Natural killer cell (primary cell): ENCODE measurements at regions of chr21 and their contacts with region 1.

Region 1: GRCh38 chr21:42892931-42893755 is at the start of gene NDUFV3:
- DNase-seq: peak; percentile 99 to 100
- ATAC-seq: peak; percentile 91 to 98 (median 92)
- H3K4me3 ChIP-seq: peak within 1 kb of the TSS; percentile 75
- H3K4me3 Mint-ChIP-seq: peak within 1 kb of the TSS; percentile 95
- H3K27ac ChIP-seq: peak within 1 kb of the TSS; percentile 91
- H3K27ac Mint-ChIP-seq: peak within 1 kb of the TSS; percentile 96 to 97
- H3K4me1 ChIP-seq: peaks cover 11% of the 10 kb centered on the region
- H3K4me1 Mint-ChIP-seq: peaks cover 8 to 14% of the 10 kb centered on the region in 2 donors
- H3K27me3 ChIP-seq: no peaks in the 10 kb centered on the region
- H3K27me3 Mint-ChIP-seq: no peaks in the 10 kb centered on the region
- CTCF ChIP-seq: no peak
- total RNA-seq, gene NDUFV3: 21.8 to 25.7 (median 23.9) TPM

Region 2: GRCh38 chr21:42652527-42653230 is 240.5 kb before region 1 on chr21:
- intact Hi-C with region 1: no loop called
- DNase-seq: no peak
- ATAC-seq: no peak
- H3K4me3 ChIP-seq: no peak overlapping the region
- H3K4me3 Mint-ChIP-seq: peak overlapping the region; percentile 83
- H3K27ac ChIP-seq: no peak overlapping the region
- H3K27ac Mint-ChIP-seq: peak overlapping the region in 1 of 2 donors; percentile 78
- H3K4me1 ChIP-seq: peaks cover 17% of the 10 kb centered on the region
- H3K4me1 Mint-ChIP-seq: peaks cover 0 to 16% of the 10 kb centered on the region in 2 donors
- H3K27me3 ChIP-seq: peaks cover 18% of the 10 kb centered on the region
- H3K27me3 Mint-ChIP-seq: peaks cover 35 to 42% of the 10 kb centered on the region in 2 donors
- CTCF ChIP-seq: no peak

Region 3: DNA sequence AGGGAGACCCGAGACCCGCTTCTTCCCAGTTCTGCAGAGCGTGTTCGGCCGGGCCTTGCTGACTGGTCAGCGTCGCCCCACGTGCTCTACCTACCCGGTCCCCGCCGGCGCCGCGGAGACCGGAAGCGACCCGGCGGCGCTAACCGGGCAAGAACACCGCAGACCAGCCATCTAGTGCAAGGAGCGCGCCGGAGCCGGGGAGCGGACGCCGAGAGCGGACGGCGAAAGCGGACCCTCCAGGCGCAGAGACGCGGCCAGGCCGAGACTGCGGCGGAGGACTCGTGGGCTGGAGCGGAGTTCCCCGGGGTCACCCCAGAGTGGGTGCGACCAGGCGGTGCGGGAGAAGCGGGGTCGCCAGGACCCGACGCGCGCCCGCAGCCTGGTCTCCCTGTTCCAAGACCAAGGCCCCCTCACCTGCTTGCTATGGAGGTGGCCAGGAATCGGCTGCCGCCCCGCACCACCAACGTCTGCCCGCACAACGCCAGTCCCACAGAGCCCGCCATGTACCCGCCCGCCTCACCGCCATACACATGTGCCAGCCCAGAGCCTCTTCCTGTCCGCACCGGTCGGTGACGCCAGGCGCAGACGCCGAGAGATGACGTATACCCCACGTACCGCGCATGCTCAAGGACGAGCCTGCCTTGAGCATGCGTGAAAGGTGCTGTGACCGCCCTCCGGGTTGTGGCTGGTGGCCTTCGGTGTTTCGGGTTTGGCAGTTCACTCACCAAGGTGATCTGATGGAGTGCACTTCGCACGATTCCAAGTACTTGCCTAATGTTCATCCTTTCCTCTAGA is 14.0 kb before region 1 on chr21 and contains the start of gene WDR4:
- intact Hi-C with region 1: loop called (anchors 1 kb)
- DNase-seq: peak; percentile 99 to 100
- ATAC-seq: peak; percentile 78 to 94 (median 84)
- H3K4me3 ChIP-seq: peak within 1 kb of the TSS; percentile 63
- H3K4me3 Mint-ChIP-seq: peak within 1 kb of the TSS; percentile 99
- H3K27ac ChIP-seq: peak within 1 kb of the TSS; percentile 93
- H3K27ac Mint-ChIP-seq: peak within 1 kb of the TSS; percentile 99
- H3K4me1 ChIP-seq: peaks cover 18% of the 10 kb centered on the region
- H3K4me1 Mint-ChIP-seq: peaks cover 32 to 33% of the 10 kb centered on the region in 2 donors
- H3K27me3 ChIP-seq: no peaks in the 10 kb centered on the region
- H3K27me3 Mint-ChIP-seq: no peaks in the 10 kb centered on the region
- CTCF ChIP-seq: no peak
- total RNA-seq, gene WDR4: 11.1 to 15.5 (median 14.0) TPM

Region 4: GRCh38 chr21:42973991-42974831 is 81.1 kb after region 1 on chr21 and contains the start of gene PKNOX1:
- intact Hi-C with region 1: loop called (anchors 1 kb)
- DNase-seq: peak; percentile 98 to 100
- ATAC-seq: peak; percentile 81 to 94 (median 82)
- H3K4me3 ChIP-seq: peak within 1 kb of the TSS; percentile 75
- H3K4me3 Mint-ChIP-seq: peak within 1 kb of the TSS; percentile 90
- H3K27ac ChIP-seq: peak within 1 kb of the TSS; percentile 90
- H3K27ac Mint-ChIP-seq: peak within 1 kb of the TSS; percentile 86 to 90
- H3K4me1 ChIP-seq: peaks cover 15% of the 10 kb centered on the region
- H3K4me1 Mint-ChIP-seq: peaks cover 10 to 17% of the 10 kb centered on the region in 2 donors
- H3K27me3 ChIP-seq: no peaks in the 10 kb centered on the region
- H3K27me3 Mint-ChIP-seq: no peaks in the 10 kb centered on the region
- CTCF ChIP-seq: no peak
- total RNA-seq, gene PKNOX1: 19.1 to 25.5 (median 21.5) TPM